GM10248 (cell line): ENCODE measurements at regions of chr3 and their contacts with region 1.

Region 1: GRCh38 chr3:128133273-128134084 is 9.9 kb upstream of the RUVBL1 start:
- DNase-seq: no peak
- CTCF ChIP-seq: peak; percentile 71

Region 2: DNA sequence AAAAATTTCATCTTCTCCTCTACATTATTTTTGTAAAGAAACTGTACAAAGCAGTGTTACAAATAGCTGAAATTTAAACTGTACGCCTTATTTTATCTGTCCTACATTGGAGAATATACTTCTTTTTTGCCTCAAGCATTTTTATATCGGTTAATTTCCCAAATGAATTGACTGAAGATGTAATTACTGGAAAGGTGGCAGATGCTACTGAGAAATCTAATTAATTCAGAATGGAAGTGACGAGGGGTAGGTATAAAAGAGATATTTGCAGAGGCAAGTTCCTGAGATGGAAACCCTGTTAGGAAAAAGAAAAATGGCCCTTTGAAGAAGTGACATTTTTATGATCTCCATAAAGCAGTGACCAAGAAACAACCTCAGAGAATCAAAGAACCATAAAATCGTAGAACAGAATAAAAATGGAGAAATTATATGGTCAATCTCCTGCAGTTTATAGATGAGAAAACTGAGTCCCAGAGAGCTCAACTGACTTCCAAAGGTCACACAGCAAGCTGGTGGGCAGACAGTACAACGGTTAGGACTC is 30.3 kb before region 1 on chr3:
- CTCF ChIA-PET with region 1: interaction called, 86 read pairs
- POLR2A ChIA-PET with region 1: no interaction called
- DNase-seq: no peak
- CTCF ChIP-seq: no peak

Region 3: DNA sequence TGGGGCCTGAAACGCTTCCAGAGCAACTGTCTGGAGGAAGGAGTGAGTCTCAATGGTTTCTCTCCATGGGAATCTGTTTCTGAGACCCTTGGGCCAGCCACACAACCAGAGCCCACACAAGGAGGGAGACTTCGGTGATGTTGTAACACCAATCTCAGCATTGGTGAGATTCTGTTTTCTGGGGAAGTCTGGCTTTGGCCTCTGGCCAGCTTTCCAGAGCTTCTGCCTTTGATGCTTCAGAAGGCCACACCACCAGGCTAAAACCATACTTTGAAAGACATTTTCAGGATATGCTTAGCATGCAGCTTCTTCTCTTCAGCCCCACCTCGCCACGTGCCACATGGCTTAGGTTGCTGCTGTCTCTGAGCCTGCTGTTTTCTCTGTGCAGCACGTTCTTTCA is 16.2 kb after region 1 on chr3:
- CTCF ChIA-PET with region 1: interaction called, 19 read pairs
- POLR2A ChIA-PET with region 1: interaction called, 3 read pairs
- DNase-seq: no peak
- CTCF ChIP-seq: no peak

Region 4: DNA sequence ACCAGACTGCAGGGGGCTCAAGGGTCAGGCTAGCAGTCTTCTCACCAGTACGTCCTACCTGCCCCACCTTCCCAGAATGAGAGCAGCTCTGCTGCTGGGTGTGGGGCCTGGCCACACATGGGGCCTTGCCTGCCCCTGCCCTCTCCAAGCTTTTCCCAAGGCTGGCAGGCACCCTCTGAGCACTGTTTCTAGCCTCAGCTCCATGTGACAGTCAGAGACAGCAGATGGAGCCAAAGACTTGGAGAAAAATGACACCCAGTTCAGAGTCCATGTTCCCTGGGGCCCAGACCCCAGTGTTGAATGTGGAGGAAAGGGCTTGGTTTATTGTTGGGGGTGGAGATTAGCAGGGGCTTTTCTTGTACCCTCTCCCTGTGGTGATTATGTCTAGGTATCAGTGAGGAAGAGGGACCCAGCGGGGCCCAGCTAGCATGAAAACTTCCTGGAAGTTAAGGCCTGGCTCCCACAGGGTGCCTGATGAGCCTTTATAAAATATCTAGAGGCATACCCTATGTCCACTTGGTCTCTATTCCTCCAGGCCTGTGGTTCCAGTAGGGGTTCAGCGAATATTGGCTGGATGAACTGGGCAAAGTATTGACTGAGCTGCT is 173.7 kb after region 1 on chr3:
- CTCF ChIA-PET with region 1: no interaction called
- POLR2A ChIA-PET with region 1: no interaction called
- DNase-seq: no peak
- CTCF ChIP-seq: peak; percentile 5

Region 5: DNA sequence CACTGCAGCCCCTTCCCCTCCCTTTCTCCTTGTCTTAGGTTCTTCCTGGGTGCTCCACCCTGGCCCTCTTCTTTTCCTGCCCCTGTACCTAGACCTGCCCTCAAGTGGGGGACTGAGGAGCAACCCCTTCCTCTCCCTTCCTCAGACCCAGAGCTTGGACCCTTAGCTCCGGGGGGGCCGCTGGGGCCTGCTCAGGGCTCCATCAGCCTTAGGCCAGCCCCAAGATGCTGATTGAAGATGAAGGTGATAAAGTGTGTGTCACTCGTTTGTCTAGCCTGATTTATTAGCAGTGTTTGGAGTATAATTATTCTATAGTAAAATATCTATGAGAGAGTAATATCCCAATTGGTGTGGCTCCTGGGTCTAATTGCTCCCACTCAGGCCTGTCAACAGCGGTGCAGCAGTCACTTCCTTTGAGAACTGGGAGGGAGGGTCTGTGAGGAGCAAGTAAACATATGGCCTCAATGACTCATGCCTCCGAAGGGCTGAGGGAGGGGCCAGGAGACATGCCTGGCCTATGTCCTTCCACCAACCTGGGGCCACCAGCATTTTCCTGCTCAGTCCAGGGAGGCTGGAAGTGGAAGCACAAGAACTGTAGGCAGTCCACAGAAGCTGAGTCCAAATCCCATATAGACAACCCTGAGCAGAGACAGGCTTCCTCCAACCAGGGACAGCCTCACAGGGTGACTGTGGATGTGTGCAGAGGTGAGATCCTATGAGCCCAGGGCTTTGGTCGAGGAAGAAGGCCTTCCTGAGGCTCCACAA is 210.0 kb after region 1 on chr3:
- CTCF ChIA-PET with region 1: no interaction called
- POLR2A ChIA-PET with region 1: no interaction called
- DNase-seq: no peak
- CTCF ChIP-seq: no peak